ENCODE measurements at regions of chr7 and their contacts with region 1.

Region 1: GRCh38 chr7:140446464-140446863 is 32.8 kb downstream of the MKRN1 start:
- DNase-seq: no peak
- H3K4me3 ChIP-seq: no peak overlapping the region
- H3K27ac ChIP-seq: no peak overlapping the region
- H3K4me1 ChIP-seq: no peaks in the 10 kb centered on the region
- H3K27me3 ChIP-seq: no peaks in the 10 kb centered on the region
- CTCF ChIP-seq: no peak

Region 2: DNA sequence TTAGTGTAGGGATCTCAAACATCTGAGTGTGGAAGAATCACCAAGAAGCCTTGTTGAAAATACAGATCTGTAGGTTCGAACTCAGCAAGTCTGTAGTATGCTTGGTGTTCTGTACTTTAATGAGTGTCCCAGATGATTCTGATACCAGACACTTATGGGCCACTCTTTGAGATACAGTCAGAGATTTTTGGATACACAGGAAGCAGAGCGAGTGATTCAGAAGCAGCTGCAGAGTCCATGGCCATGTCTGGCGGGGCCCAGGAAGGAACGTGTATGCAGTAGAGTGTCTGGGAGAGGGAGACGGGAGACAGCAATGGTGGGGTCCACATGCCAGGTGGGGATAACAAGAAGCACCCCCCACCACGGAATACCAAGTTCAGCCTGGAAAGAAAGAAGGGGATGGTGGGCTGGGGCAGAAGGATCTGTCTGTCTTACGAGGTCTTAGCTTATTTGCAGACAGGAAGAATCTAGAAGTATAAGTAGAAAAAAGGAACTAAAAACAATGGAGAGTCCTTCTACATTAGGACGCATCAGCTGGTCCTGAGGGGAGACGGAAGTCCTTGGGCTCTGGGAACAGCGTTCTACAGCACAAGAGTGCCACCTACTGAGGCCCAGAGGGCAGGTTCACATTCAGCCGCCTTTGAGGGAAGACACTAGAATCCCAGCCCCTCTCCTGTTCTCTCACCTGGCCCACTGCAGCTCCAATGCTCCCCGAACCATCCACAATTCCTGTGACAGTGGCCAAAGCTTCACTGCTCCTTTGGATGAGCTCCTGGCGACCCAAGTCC is 103.5 kb before region 1 on chr7:
- intact Hi-C with region 1: loop called (anchors 10 kb)
- DNase-seq: peak; percentile 49
- H3K4me3 ChIP-seq: no peak overlapping the region
- H3K27ac ChIP-seq: no peak overlapping the region
- H3K4me1 ChIP-seq: peaks cover 3% of the 10 kb centered on the region
- H3K27me3 ChIP-seq: no peaks in the 10 kb centered on the region
- CTCF ChIP-seq: peak; percentile 50